A549 (cell line): ENCODE measurements at regions of chr5 and their contacts with region 1.

Region 1: DNA sequence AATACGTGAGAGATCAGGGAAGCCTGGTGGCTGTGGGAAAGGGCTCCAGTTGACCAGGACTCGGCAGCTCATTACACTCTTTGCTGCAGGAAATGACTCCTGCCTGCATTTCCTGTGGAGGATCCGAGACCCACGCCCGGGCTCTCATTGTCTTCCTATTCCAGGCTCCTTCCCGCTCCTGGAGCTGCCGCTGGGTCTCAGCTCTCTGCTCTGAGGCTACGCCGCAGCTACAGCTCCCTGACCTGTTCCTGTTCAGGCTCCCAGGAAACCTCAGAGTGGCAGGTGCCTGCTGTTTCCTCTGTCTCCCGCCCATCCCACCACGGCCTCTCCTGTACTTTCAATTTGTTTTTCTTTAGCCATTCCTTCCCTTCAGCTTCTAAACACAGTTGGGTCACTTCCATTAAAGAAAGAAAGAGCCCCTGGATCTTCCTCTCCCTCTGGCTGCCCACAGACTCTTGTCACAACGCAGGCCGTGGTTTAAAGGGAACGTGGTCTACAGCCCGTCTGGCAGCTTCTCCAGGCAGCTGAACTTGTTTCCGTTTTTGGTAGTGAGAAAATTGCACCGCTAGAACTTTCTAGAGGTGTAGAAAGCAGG is 71.5 kb downstream of the IL6ST start:
- DNase-seq: no peak
- ATAC-seq: no peak
- H3K4me3 ChIP-seq: no peak overlapping the region
- H3K27ac ChIP-seq: peak overlapping the region; percentile 31 to 82; a peak in 3 of 6 replicates
- H3K4me1 ChIP-seq: peaks cover 25% of the 10 kb centered on the region
- CTCF ChIP-seq: no peak
- EP300 ChIP-seq: no peak
- POLR2A ChIP-seq: no peak
- RAD21 ChIP-seq: no peak

Region 2: GRCh38 chr5:55570026-55570425 is 353.2 kb before region 1 on chr5:
- CTCF ChIA-PET with region 1: no interaction called
- POLR2A ChIA-PET with region 1: no interaction called
- DNase-seq: no peak
- ATAC-seq: no peak
- H3K4me3 ChIP-seq: no peak overlapping the region
- H3K27ac ChIP-seq: no peak overlapping the region; a peak in 1 of 6 replicates
- H3K4me1 ChIP-seq: no peaks in the 10 kb centered on the region
- CTCF ChIP-seq: no peak
- EP300 ChIP-seq: no peak
- POLR2A ChIP-seq: no peak
- RAD21 ChIP-seq: no peak

Region 3: GRCh38 chr5:55908804-55909203 is 14.5 kb before region 1 on chr5:
- CTCF ChIA-PET with region 1: interaction called, 10 read pairs
- POLR2A ChIA-PET with region 1: no interaction called
- DNase-seq: no peak
- ATAC-seq: no peak
- H3K4me3 ChIP-seq: no peak overlapping the region
- H3K27ac ChIP-seq: no peak overlapping the region
- H3K4me1 ChIP-seq: peaks cover 23% of the 10 kb centered on the region
- CTCF ChIP-seq: no peak
- EP300 ChIP-seq: no peak
- POLR2A ChIP-seq: no peak
- RAD21 ChIP-seq: no peak